Left cardiac atrium (tissue), 4 donors: ENCODE measurements at regions of chr9 and their contacts with region 1.

Region 1: DNA sequence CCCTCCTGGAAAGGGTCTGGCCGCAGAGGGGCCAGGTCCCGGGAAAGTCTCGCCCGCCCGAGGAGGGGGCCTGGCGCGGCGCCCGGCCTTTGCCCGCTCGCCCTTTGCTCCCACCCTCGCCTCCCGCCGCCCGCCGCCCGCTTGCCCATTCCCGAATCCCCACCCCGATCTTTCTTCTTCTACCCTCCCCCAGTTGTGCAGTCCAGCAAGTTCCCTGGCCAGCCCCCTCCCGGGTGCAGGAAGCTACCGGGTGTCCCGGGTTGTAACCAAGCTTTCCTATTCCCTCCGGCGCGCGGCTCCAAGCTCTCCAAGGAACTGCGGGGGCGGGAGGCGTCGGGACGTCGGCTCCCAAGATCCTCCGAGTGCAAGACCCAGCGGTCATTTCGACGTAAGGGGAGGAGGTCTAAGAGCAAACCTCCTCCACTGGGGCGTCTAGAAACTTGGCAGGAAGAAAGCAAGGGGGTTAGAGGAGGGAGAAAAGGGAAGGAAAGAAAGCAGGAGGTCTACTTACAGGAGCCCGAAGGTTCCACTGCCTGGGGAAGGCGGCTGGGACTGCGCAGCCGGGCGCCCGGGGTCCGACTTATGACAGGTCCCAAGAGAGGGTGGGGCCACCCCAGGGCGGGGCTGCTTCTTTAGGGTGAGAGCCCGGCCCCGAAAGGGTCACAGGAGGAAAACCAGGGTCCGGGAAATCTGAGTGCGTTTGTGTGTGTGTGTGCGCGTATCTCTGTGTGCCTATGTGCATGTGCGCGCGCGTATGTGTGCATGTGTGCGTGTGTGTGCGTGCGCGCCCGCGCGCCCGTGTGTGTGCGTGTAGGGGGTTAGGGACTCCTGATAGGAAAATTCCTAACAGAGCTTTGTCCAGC is at the start of gene PTGR1:
- DNase-seq: peak; percentile 90
- ATAC-seq: peak; percentile 89 to 94
- total RNA-seq, gene PTGR1: 37.5 to 46.3 TPM

Region 2: DNA sequence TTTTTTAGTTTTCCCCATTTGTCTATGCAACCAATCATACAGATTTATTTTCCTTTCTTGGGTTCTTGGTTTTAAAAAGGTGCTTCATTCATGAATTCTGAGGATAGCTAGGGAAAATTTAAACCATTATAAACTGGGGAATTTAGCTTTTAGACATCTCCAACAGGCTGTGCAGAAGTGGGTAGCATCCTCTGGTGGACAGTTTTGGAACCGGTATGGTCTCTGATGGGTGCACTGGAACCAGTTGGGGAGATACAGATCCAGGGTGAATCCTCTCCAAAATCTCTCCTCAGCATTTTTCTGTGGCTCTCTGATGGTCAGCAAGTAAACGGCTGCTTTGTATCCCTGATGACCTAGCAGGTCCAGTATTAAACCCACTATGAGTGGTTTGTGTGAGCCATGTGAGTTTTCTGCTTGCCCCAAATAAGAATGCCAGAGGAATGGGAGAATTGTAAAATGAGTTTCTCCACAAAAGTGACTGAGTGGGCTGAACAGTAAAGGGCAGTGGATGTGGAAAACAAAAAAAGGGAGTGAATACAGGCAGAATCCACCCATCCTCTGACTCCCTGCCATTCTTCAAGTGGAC is 22.7 kb after region 1 on chr9:
- intact Hi-C with region 1: loop called in 1 of 2 experiments (anchors 1 kb)
- DNase-seq: no peak
- ATAC-seq: peak; percentile 65 to 85